ENCODE measurements at regions of chr17 and their contacts with region 1.

Region 1: GRCh38 chr17:58417300-58418092 is at the start of gene RNF43:
- DNase-seq: peak; percentile 88
- H3K4me3 ChIP-seq: no peak within 1 kb of the TSS
- H3K27ac ChIP-seq: no peak within 1 kb of the TSS
- H3K4me1 ChIP-seq: no peaks in the 10 kb centered on the region
- H3K27me3 ChIP-seq: peaks cover 10 to 50% of the 10 kb centered on the region in 2 experiments
- CTCF ChIP-seq: peak; percentile 60 to 81
- POLR2A ChIP-seq: no peak
- total RNA-seq, gene RNF43: not detected in 2 replicates

Region 2: GRCh38 chr17:58303971-58304725 is 113.3 kb before region 1 on chr17:
- CTCF ChIA-PET with region 1: interaction called, 30 read pairs
- POLR2A ChIA-PET with region 1: no interaction called
- dilution Hi-C with region 1: no loop called
- intact Hi-C with region 1: loop called (anchors 1 kb)
- DNase-seq: peak; percentile 26
- H3K4me3 ChIP-seq: no peak overlapping the region
- H3K27ac ChIP-seq: no peak overlapping the region
- H3K4me1 ChIP-seq: no peaks in the 10 kb centered on the region
- H3K27me3 ChIP-seq: peaks cover 0 to 6% of the 10 kb centered on the region in 2 experiments
- CTCF ChIP-seq: peak; percentile 80 to 84
- POLR2A ChIP-seq: no peak

Region 3: DNA sequence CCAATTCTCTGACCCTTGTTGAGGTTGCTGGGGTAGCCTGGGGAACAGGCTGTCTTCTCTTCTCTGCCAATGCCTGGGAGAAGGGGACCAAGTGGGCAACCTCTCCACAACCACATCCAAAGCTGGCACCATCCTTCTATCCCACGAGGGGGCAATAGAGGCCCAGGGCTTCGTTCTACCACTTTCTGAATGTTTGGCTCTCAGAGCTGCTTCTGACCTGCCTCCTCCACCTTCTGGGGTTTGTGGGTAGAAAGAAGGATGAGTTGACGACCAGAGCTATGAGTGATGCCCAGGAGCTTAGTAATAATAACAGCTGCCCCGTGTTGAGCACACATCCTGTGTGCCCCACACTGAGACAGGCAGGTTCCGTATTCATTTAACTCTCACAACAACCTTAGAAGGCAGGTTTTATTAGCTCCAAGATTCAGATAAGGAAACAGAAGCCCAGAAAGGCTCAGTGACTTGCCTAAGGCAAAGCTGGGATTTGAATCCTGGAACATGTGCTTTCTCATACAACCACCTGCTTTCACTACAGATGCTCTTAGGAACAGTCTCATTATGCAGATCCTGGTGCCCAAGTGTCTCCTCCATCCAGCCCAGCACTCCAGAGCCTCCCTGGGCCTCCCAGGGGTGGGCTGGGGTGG is 100.0 kb before region 1 on chr17:
- CTCF ChIA-PET with region 1: interaction called, 79 read pairs
- POLR2A ChIA-PET with region 1: no interaction called
- dilution Hi-C with region 1: no loop called
- intact Hi-C with region 1: loop called (anchors 1 kb)
- DNase-seq: peak; percentile 26
- H3K4me3 ChIP-seq: no peak overlapping the region
- H3K27ac ChIP-seq: no peak overlapping the region
- H3K4me1 ChIP-seq: no peaks in the 10 kb centered on the region
- H3K27me3 ChIP-seq: no peaks in the 10 kb centered on the region
- CTCF ChIP-seq: peak; percentile 46 to 71
- POLR2A ChIP-seq: no peak

Region 4: GRCh38 chr17:58427807-58428206 is 10.3 kb after region 1 on chr17:
- CTCF ChIA-PET with region 1: interaction called, 20 read pairs
- POLR2A ChIA-PET with region 1: no interaction called
- dilution Hi-C with region 1: no loop called
- intact Hi-C with region 1: no loop called
- DNase-seq: no peak
- H3K4me3 ChIP-seq: no peak overlapping the region
- H3K27ac ChIP-seq: no peak overlapping the region
- H3K4me1 ChIP-seq: no peaks in the 10 kb centered on the region
- H3K27me3 ChIP-seq: no peaks in the 10 kb centered on the region
- CTCF ChIP-seq: no peak
- POLR2A ChIP-seq: no peak

Region 5: GRCh38 chr17:58728786-58729185 is 311.3 kb after region 1 on chr17:
- CTCF ChIA-PET with region 1: no interaction called
- POLR2A ChIA-PET with region 1: no interaction called
- dilution Hi-C with region 1: no loop called
- intact Hi-C with region 1: no loop called
- DNase-seq: no peak
- H3K4me3 ChIP-seq: no peak overlapping the region
- H3K27ac ChIP-seq: no peak overlapping the region
- H3K4me1 ChIP-seq: no peaks in the 10 kb centered on the region
- H3K27me3 ChIP-seq: no peaks in the 10 kb centered on the region
- CTCF ChIP-seq: no peak
- POLR2A ChIP-seq: no peak